Gastrocnemius medialis (tissue), 4 donors: ENCODE measurements at regions of chr3 and their contacts with region 1.

Region 1: GRCh38 chr3:149009732-149010131 is 18.4 kb downstream of the GYG1 start:
- DNase-seq: no peak
- ATAC-seq: peak in 1 of 2 donors; percentile 10
- H3K4me3 ChIP-seq: no peak overlapping the region
- H3K27ac ChIP-seq: peak overlapping the region; percentile 98 to 100 (median 100)
- H3K4me1 ChIP-seq: peaks cover 87 to 88% of the 10 kb centered on the region in 2 donors
- H3K27me3 ChIP-seq: no peaks in the 10 kb centered on the region
- CTCF ChIP-seq: no peak
- POLR2A ChIP-seq: no peak

Region 2: DNA sequence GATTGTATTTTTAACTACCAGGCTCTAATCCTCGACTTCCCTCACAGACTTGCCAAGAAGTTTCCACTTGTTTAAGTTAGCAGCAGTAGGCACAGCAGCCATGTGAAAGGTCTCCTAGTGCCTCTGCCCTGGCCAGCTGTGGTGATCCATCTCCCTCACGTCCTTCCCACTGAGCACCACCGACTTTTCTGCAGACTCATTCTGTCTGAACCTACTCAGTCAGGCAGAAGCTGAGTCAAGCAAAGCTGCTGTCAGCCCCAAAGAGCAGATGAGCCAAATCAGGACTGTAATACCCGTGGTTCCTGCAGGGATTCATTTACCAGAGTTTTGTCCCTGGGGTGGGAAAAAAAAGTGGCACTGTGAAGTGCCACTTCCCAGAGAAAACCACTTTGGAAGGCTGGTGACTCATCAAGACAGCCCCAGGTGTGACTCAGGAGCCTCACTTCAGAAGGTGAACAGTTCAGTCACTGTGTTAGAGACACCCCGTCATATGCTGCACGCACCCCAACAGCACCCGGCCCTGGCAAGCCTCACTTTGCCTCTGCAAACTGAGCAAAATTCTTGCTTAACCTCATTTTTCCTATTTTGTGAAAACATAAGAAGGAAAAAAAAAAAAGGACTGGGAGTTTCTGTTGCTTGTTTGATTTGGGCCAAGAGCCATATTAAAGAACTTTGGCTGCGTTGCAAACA is 572.1 kb after region 1 on chr3:
- in situ Hi-C with region 1: no loop called
- intact Hi-C with region 1: no loop called
- DNase-seq: peak; percentile 23 to 66
- ATAC-seq: peak; percentile 80 to 95
- H3K4me3 ChIP-seq: no peak overlapping the region
- H3K27ac ChIP-seq: peak overlapping the region; percentile 18 to 64 (median 38)
- H3K4me1 ChIP-seq: peaks cover 57 to 58% of the 10 kb centered on the region in 2 donors
- H3K27me3 ChIP-seq: no peaks in the 10 kb centered on the region
- CTCF ChIP-seq: no peak
- POLR2A ChIP-seq: no peak

Region 3: DNA sequence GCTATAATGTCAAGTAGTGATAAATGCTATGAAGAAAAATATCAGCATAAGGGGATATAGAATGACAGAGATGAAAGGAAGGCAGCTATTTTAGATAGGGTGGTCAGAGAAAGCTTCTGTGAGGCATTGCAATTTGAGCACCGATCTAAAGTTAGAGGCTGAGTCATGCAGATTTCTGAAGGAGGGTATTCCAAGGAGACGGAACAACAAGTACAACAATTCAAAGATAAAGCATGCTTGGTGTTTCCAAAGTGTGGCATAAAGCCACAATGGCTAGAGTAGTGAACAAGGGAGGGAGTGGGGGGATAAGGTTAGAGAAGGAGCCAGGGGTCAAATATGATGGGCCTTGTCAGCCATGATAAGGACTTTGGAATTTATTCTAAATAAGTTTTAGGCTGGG is 889.0 kb after region 1 on chr3:
- in situ Hi-C with region 1: no loop called
- intact Hi-C with region 1: loop called (anchors 10 kb)
- DNase-seq: peak; percentile 40 to 62
- ATAC-seq: peak; percentile 97 to 98
- H3K4me3 ChIP-seq: no peak overlapping the region
- H3K27ac ChIP-seq: peak overlapping the region; percentile 82 to 85 (median 82)
- H3K4me1 ChIP-seq: peaks cover 62 to 70% of the 10 kb centered on the region in 2 donors
- H3K27me3 ChIP-seq: no peaks in the 10 kb centered on the region
- CTCF ChIP-seq: no peak
- POLR2A ChIP-seq: no peak